T-cell (primary cell): ENCODE measurements at regions of chr18 and their contacts with region 1.

Region 1: GRCh38 chr18:80140455-80140985 is 31.5 kb downstream of the ADNP2 start:
- DNase-seq: no peak
- ATAC-seq: no peak
- H3K4me3 ChIP-seq: no peak overlapping the region
- H3K4me3 Mint-ChIP-seq: no peak overlapping the region
- H3K27ac ChIP-seq: no peak overlapping the region
- H3K27ac Mint-ChIP-seq: no peak overlapping the region
- H3K4me1 ChIP-seq: no peaks in the 10 kb centered on the region
- H3K4me1 Mint-ChIP-seq: no peaks in the 10 kb centered on the region
- H3K27me3 ChIP-seq: no peaks in the 10 kb centered on the region
- H3K27me3 Mint-ChIP-seq: no peaks in the 10 kb centered on the region

Region 2: DNA sequence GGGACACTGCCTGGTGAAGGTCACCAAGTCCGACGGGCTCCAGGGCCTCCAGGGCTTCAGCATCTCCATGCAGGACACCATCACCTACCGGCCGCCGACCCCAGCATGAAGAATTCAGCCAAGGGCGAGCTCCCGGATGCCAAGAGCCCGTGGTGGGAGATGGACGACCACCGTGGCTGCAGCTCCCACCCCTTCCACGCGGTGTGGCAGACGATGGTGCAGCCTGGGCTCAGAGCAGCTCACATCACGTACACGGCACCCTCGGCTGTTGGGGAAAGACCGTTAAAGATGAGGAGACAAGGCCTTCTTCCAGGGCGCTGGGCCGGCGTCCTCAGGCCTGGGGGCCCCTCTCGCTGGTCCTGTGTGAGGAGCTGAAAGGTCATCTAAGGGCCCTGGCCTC is 62.6 kb before region 1 on chr18:
- CTCF ChIA-PET with region 1: no interaction called
- POLR2A ChIA-PET with region 1: no interaction called
- DNase-seq: no peak
- ATAC-seq: no peak
- H3K4me3 ChIP-seq: no peak overlapping the region
- H3K4me3 Mint-ChIP-seq: no peak overlapping the region
- H3K27ac ChIP-seq: no peak overlapping the region
- H3K27ac Mint-ChIP-seq: no peak overlapping the region
- H3K4me1 ChIP-seq: no peaks in the 10 kb centered on the region
- H3K4me1 Mint-ChIP-seq: no peaks in the 10 kb centered on the region
- H3K27me3 ChIP-seq: peaks cover 0 to 27% of the 10 kb centered on the region in 2 experiments
- H3K27me3 Mint-ChIP-seq: peaks cover 7 to 15% of the 10 kb centered on the region in 2 donors

Region 3: GRCh38 chr18:80129672-80130367 is 10.7 kb before region 1 on chr18:
- CTCF ChIA-PET with region 1: no interaction called
- POLR2A ChIA-PET with region 1: interaction called in 1 of 2 experiments, 10 read pairs
- DNase-seq: no peak
- ATAC-seq: no peak
- H3K4me3 ChIP-seq: no peak overlapping the region
- H3K4me3 Mint-ChIP-seq: no peak overlapping the region
- H3K27ac ChIP-seq: no peak overlapping the region
- H3K27ac Mint-ChIP-seq: no peak overlapping the region
- H3K4me1 ChIP-seq: peaks cover 2 to 8% of the 10 kb centered on the region in 2 experiments
- H3K4me1 Mint-ChIP-seq: peaks cover 38 to 55% (median 45%) of the 10 kb centered on the region in 3 donors
- H3K27me3 ChIP-seq: no peaks in the 10 kb centered on the region
- H3K27me3 Mint-ChIP-seq: no peaks in the 10 kb centered on the region